Activated CD4-positive, alpha-beta T cell treated with anti-CD3 and anti-CD28 coated beads for 36 hours (primary cell): ENCODE measurements at regions of chr1 and their contacts with region 1.

Region 1: DNA sequence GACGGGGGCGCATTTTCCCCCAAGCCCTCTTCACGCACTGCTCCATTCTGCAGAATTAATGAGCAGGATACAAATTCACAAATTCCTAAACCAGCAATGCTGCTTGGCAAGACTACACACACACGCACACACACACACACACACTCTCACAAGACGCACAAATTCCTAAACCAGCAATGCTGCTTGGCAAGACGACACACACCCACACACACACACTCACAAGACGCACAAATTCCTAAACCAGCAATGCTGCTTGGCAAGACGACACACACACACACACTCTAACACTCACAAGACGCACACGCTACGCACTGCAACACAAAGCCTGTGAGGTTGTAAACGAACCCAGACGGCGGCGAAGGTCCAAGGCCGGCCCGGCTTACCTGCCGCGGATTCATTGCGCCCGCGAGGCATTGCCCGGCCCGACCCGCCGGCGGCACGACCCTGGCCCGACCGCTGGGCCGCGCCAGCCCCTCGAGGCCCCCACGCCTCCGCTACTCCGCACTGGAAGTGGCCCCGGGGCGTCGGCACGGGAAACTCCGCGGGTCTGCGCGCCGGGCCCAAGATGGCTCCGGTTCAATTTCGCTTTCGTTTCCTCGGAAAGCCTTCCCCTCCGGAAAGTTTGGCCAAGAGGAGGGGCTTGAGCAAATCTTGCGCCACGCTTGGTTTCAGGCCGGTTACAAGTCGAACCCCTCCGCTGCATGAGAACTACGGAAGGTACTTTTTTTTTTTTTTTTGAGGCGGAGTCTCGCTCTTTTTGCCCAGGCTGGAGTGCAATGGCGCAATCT is at the start of gene ADAR:
- DNase-seq: peak; percentile 95
- ATAC-seq: peak; percentile 69
- H3K4me3 Mint-ChIP-seq: peak within 1 kb of the TSS; percentile 95
- H3K27ac Mint-ChIP-seq: peak within 1 kb of the TSS; percentile 99
- H3K4me1 Mint-ChIP-seq: peaks cover 75% of the 10 kb centered on the region
- H3K27me3 Mint-ChIP-seq: no peaks in the 10 kb centered on the region
- total RNA-seq, gene ADAR: 310 to 332 TPM

Region 2: GRCh38 chr1:153545067-153546055 is 1062.4 kb before region 1 on chr1 and contains the start of gene S100A4:
- CTCF ChIA-PET with region 1: no interaction called
- POLR2A ChIA-PET with region 1: no interaction called
- intact Hi-C with region 1: loop called in 1 of 2 experiments (anchors 5 kb)
- DNase-seq: peak; percentile 97
- ATAC-seq: peak; percentile 83
- H3K4me3 Mint-ChIP-seq: peak within 1 kb of the TSS; percentile 78
- H3K27ac Mint-ChIP-seq: peak within 1 kb of the TSS; percentile 96
- H3K4me1 Mint-ChIP-seq: peaks cover 70% of the 10 kb centered on the region
- H3K27me3 Mint-ChIP-seq: no peaks in the 10 kb centered on the region
- total RNA-seq, gene S100A4: 84.8 to 166 TPM

Region 3: GRCh38 chr1:154493276-154493675 is 114.5 kb before region 1 on chr1:
- CTCF ChIA-PET with region 1: interaction called, 4 read pairs
- POLR2A ChIA-PET with region 1: interaction called, 7 read pairs
- intact Hi-C with region 1: loop called in 1 of 2 experiments (anchors 5 kb)
- DNase-seq: no peak
- ATAC-seq: no peak
- H3K4me3 Mint-ChIP-seq: no peak overlapping the region
- H3K27ac Mint-ChIP-seq: no peak overlapping the region
- H3K4me1 Mint-ChIP-seq: peaks cover 41% of the 10 kb centered on the region
- H3K27me3 Mint-ChIP-seq: peaks cover 4% of the 10 kb centered on the region

Region 4: GRCh38 chr1:154955718-154956543 is 348.1 kb after region 1 on chr1 and contains the start of gene PBXIP1:
- CTCF ChIA-PET with region 1: interaction called, 3 read pairs
- POLR2A ChIA-PET with region 1: no interaction called
- intact Hi-C with region 1: loop called in 1 of 2 experiments (anchors 1 kb)
- DNase-seq: peak; percentile 83
- ATAC-seq: peak; percentile 54
- H3K4me3 Mint-ChIP-seq: peak within 1 kb of the TSS; percentile 85
- H3K27ac Mint-ChIP-seq: peak within 1 kb of the TSS; percentile 95
- H3K4me1 Mint-ChIP-seq: peaks cover 82% of the 10 kb centered on the region
- H3K27me3 Mint-ChIP-seq: no peaks in the 10 kb centered on the region
- total RNA-seq, gene PBXIP1: 22.6 to 28.1 TPM

Region 5: GRCh38 chr1:154974063-154974807 is 366.4 kb after region 1 on chr1 and contains the start of gene CKS1B:
- CTCF ChIA-PET with region 1: no interaction called
- POLR2A ChIA-PET with region 1: interaction called, 3 read pairs
- intact Hi-C with region 1: loop called in 1 of 2 experiments (anchors 1 kb)
- DNase-seq: peak; percentile 98
- ATAC-seq: peak; percentile 86
- H3K4me3 Mint-ChIP-seq: no peak within 1 kb of the TSS
- H3K27ac Mint-ChIP-seq: no peak within 1 kb of the TSS
- H3K4me1 Mint-ChIP-seq: peaks cover 30% of the 10 kb centered on the region
- H3K27me3 Mint-ChIP-seq: no peaks in the 10 kb centered on the region
- total RNA-seq, gene CKS1B: 190 to 196 TPM